CD4-positive, alpha-beta T cell (primary cell): ENCODE measurements at regions of chr12 and their contacts with region 1.

Region 1: GRCh38 chr12:14913381-14913781 is 25.0 kb downstream of the ERP27 start:
- DNase-seq: no peak
- ATAC-seq: no peak
- H3K4me3 ChIP-seq: no peak overlapping the region
- H3K4me3 Mint-ChIP-seq: no peak overlapping the region
- H3K27ac ChIP-seq: no peak overlapping the region
- H3K27ac Mint-ChIP-seq: no peak overlapping the region
- H3K4me1 ChIP-seq: no peaks in the 10 kb centered on the region
- H3K4me1 Mint-ChIP-seq: peaks cover 14% of the 10 kb centered on the region
- H3K27me3 ChIP-seq: no peaks in the 10 kb centered on the region
- H3K27me3 Mint-ChIP-seq: no peaks in the 10 kb centered on the region
- CTCF ChIP-seq: no peak

Region 2: GRCh38 chr12:14225064-14225463 is 688.3 kb before region 1 on chr12:
- CTCF ChIA-PET with region 1: no interaction called
- POLR2A ChIA-PET with region 1: no interaction called
- intact Hi-C with region 1: loop called in 1 of 2 experiments (anchors 10 kb)
- DNase-seq: no peak
- ATAC-seq: no peak
- H3K4me3 ChIP-seq: no peak overlapping the region
- H3K4me3 Mint-ChIP-seq: no peak overlapping the region
- H3K27ac ChIP-seq: no peak overlapping the region
- H3K27ac Mint-ChIP-seq: no peak overlapping the region
- H3K4me1 ChIP-seq: no peaks in the 10 kb centered on the region
- H3K4me1 Mint-ChIP-seq: peaks cover 7% of the 10 kb centered on the region
- H3K27me3 ChIP-seq: no peaks in the 10 kb centered on the region
- H3K27me3 Mint-ChIP-seq: no peaks in the 10 kb centered on the region
- CTCF ChIP-seq: no peak

Region 3: GRCh38 chr12:14723763-14724162 is 189.6 kb before region 1 on chr12:
- CTCF ChIA-PET with region 1: no interaction called
- POLR2A ChIA-PET with region 1: no interaction called
- intact Hi-C with region 1: no loop called
- DNase-seq: peak; percentile 21 to 80 (median 46)
- ATAC-seq: peak; percentile 76
- H3K4me3 ChIP-seq: no peak overlapping the region
- H3K4me3 Mint-ChIP-seq: no peak overlapping the region
- H3K27ac ChIP-seq: no peak overlapping the region
- H3K27ac Mint-ChIP-seq: no peak overlapping the region
- H3K4me1 ChIP-seq: no peaks in the 10 kb centered on the region
- H3K4me1 Mint-ChIP-seq: peaks cover 5% of the 10 kb centered on the region
- H3K27me3 ChIP-seq: no peaks in the 10 kb centered on the region
- H3K27me3 Mint-ChIP-seq: peaks cover 11% of the 10 kb centered on the region
- CTCF ChIP-seq: peak; percentile 81

Region 4: GRCh38 chr12:14828896-14829295 is 84.5 kb before region 1 on chr12:
- CTCF ChIA-PET with region 1: no interaction called
- POLR2A ChIA-PET with region 1: no interaction called
- intact Hi-C with region 1: no loop called
- DNase-seq: peak in 2 of 14 experiments; percentile 13 to 27
- ATAC-seq: no peak
- H3K4me3 ChIP-seq: no peak overlapping the region
- H3K4me3 Mint-ChIP-seq: no peak overlapping the region
- H3K27ac ChIP-seq: no peak overlapping the region
- H3K27ac Mint-ChIP-seq: no peak overlapping the region
- H3K4me1 ChIP-seq: no peaks in the 10 kb centered on the region
- H3K4me1 Mint-ChIP-seq: no peaks in the 10 kb centered on the region
- H3K27me3 ChIP-seq: no peaks in the 10 kb centered on the region
- H3K27me3 Mint-ChIP-seq: peaks cover 7% of the 10 kb centered on the region
- CTCF ChIP-seq: no peak

Region 5: GRCh38 chr12:14873440-14874185 is 39.8 kb before region 1 on chr12:
- CTCF ChIA-PET with region 1: no interaction called
- POLR2A ChIA-PET with region 1: no interaction called
- intact Hi-C with region 1: no loop called
- DNase-seq: no peak
- ATAC-seq: no peak
- H3K4me3 ChIP-seq: no peak overlapping the region
- H3K4me3 Mint-ChIP-seq: no peak overlapping the region
- H3K27ac ChIP-seq: no peak overlapping the region
- H3K27ac Mint-ChIP-seq: no peak overlapping the region
- H3K4me1 ChIP-seq: no peaks in the 10 kb centered on the region
- H3K4me1 Mint-ChIP-seq: no peaks in the 10 kb centered on the region
- H3K27me3 ChIP-seq: peaks cover 0 to 2% of the 10 kb centered on the region in 2 experiments
- H3K27me3 Mint-ChIP-seq: no peaks in the 10 kb centered on the region
- CTCF ChIP-seq: no peak

Region 6: GRCh38 chr12:14930299-14930698 is 16.9 kb after region 1 on chr12:
- CTCF ChIA-PET with region 1: interaction called, 4 read pairs
- POLR2A ChIA-PET with region 1: interaction called, 3 read pairs
- intact Hi-C with region 1: loop called in 1 of 2 experiments (anchors 2 kb)
- DNase-seq: no peak
- ATAC-seq: no peak
- H3K4me3 ChIP-seq: no peak overlapping the region
- H3K4me3 Mint-ChIP-seq: no peak overlapping the region
- H3K27ac ChIP-seq: no peak overlapping the region
- H3K27ac Mint-ChIP-seq: no peak overlapping the region
- H3K4me1 ChIP-seq: no peaks in the 10 kb centered on the region
- H3K4me1 Mint-ChIP-seq: peaks cover 4% of the 10 kb centered on the region
- H3K27me3 ChIP-seq: no peaks in the 10 kb centered on the region
- H3K27me3 Mint-ChIP-seq: no peaks in the 10 kb centered on the region
- CTCF ChIP-seq: no peak